ENCODE measurements at regions of chr10 and their contacts with region 1.

Region 1: DNA sequence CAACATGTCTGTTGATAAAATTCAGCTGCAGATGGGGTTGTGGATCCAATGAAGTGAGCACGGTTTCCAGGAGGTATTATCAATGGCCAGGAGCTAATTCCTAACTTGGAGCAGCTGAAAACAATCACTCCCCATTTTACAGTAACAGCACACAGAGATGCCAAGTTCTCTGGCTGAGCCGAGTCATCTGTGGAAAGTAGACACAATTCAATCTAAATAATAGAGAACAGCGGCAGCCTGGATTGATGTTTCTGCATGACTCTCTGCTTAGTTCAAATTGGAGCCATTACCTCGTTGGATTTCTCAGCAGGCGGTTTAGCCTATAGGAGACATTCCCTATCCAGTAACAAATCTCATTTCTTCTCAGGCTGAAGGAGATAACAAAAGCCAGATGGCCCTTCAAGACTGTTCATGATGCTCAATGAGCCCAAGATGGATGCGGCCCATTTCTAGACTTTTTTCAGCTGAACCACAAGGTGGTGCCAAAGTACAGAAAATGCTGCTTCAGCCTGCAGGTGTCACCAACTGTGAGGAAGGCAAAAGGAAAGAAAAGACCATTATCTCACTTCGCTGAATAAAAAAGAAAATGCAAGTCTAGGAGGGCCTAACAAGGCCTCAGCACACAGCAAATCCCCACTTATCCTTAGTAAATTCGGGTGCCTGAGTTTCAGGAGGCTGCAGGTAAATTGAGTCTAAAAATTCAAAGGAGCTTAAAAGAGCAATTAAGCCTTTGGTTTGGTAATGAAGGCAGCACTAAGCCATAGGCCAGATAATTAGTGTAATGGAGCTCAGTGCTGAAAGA is 83.7 kb downstream of the SLC16A9 start:
- DNase-seq: no peak
- H3K4me3 ChIP-seq: no peak overlapping the region
- H3K27ac ChIP-seq: no peak overlapping the region
- H3K4me1 ChIP-seq: peaks cover 0 to 3% of the 10 kb centered on the region in 2 donors
- H3K27me3 ChIP-seq: no peaks in the 10 kb centered on the region
- CTCF ChIP-seq: peak; percentile 68 to 88 (median 84)

Region 2: GRCh38 chr10:58952747-58953466 is 673.0 kb before region 1 on chr10:
- intact Hi-C with region 1: loop called (anchors 10 kb)
- DNase-seq: peak in 1 of 2 donors; percentile 72
- H3K4me3 ChIP-seq: no peak overlapping the region
- H3K27ac ChIP-seq: peak overlapping the region in 1 of 2 donors; percentile 1
- H3K4me1 ChIP-seq: peaks cover 0 to 7% of the 10 kb centered on the region in 2 donors
- H3K27me3 ChIP-seq: no peaks in the 10 kb centered on the region
- CTCF ChIP-seq: peak; percentile 74 to 88 (median 84)

Region 3: DNA sequence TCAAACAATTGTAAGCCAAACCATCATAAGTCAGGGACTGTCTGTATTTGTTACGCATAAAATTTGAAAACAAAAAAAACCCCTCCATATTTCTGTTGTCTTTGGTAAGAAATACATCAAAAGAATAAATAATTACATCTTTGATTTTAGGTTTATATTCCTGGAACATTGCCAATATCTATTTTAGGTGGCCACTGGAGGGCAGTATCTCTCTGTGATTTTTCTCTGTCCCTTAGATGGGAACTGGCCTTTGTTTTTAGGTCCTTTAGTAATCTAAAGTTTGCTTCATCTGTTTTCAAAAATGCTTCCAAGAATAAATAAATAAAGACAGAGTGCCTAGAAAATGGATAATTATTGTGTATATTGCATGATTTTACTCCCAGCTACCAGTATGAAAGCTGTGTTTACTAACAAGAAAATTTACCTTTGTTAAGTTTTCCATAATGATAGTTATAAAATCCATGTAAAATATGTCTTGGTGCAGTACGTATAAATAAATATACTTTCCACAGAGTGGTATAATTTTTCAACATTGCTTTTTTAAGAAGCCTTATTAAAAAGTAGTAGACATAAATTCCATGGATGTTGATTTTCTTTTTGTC is 385.2 kb before region 1 on chr10:
- intact Hi-C with region 1: loop called (anchors 1 kb)
- DNase-seq: no peak
- H3K4me3 ChIP-seq: no peak overlapping the region
- H3K27ac ChIP-seq: no peak overlapping the region
- H3K4me1 ChIP-seq: no peaks in the 10 kb centered on the region
- H3K27me3 ChIP-seq: no peaks in the 10 kb centered on the region
- CTCF ChIP-seq: peak; percentile 47 to 71 (median 68)

Region 4: DNA sequence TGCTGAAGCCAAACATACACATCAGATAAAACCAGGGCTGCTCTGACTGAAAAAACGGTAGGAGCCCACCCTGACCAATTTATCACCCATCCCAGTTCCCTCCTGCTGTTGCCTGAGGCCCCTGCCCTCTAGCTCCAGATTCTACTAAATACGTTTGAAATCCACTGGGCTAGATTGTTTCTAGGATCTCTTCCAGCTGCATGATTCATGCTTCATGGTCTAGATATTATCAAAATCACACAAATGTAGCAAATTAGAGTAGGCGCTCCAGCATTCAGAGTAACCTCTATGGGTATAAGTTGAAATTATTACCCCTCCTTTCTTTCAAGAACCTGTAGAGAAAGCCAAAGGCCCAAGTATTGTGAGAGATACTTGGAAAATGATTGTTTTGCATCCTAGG is 112.4 kb before region 1 on chr10:
- intact Hi-C with region 1: no loop called
- DNase-seq: no peak
- H3K4me3 ChIP-seq: no peak overlapping the region
- H3K27ac ChIP-seq: no peak overlapping the region
- H3K4me1 ChIP-seq: no peaks in the 10 kb centered on the region
- H3K27me3 ChIP-seq: no peaks in the 10 kb centered on the region
- CTCF ChIP-seq: no peak

Region 5: GRCh38 chr10:59808896-59809643 is 183.1 kb after region 1 on chr10:
- intact Hi-C with region 1: loop called (anchors 1 kb)
- DNase-seq: peak in 1 of 2 donors; percentile 84
- H3K4me3 ChIP-seq: no peak overlapping the region
- H3K27ac ChIP-seq: peak overlapping the region; percentile 15 to 66
- H3K4me1 ChIP-seq: peaks cover 12 to 22% of the 10 kb centered on the region in 2 donors
- H3K27me3 ChIP-seq: no peaks in the 10 kb centered on the region
- CTCF ChIP-seq: peak; percentile 9 to 54 (median 51)

Region 6: DNA sequence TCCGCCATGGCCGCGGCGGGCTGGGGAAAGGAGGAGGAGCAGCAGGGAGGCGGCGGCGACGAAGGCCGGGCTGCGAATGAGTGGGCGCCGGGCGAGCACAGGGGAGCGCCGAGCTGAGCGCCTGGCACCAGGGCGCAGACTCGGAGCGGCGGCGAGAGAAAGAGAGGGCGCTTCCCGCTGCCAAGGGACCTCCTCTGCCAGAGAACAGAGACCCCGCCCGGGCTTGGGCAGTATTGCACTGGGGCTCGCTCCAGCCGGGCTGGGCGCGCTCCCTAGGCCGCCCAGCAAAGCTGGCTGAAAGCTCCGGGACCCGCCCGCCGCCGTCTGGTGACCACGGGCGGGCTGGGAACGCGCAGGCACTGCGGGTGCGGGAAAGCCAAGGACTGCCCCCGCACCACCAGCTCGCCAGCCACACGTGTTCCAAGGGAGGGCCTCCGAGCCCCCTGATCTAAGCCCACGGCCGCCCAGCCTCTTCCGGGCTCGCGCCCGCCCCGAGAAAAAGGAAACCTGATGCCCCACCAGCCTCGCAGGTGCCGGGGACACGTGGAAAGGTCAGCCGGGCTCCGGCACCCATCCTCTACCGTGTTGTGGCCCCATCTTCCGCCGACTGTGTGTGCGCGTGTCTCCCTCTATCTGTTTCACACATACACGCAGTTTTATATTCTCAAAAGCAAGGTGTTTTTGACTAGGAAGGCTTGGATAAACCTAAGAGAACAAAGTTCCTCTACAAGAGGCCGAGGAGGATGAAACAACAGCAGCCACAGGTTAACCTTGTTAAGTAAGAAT is 280.7 kb after region 1 on chr10 and contains the start of gene CCDC6:
- intact Hi-C with region 1: loop called (anchors 5 kb)
- DNase-seq: peak; percentile 68 to 96
- H3K4me3 ChIP-seq: peak within 1 kb of the TSS; percentile 80 to 87
- H3K27ac ChIP-seq: peak within 1 kb of the TSS; percentile 90 to 95
- H3K4me1 ChIP-seq: peaks cover 0 to 12% of the 10 kb centered on the region in 2 donors
- H3K27me3 ChIP-seq: no peaks in the 10 kb centered on the region
- CTCF ChIP-seq: peak; percentile 77 to 97 (median 91)
- total RNA-seq, gene CCDC6: 21.1 TPM

Region 7: DNA sequence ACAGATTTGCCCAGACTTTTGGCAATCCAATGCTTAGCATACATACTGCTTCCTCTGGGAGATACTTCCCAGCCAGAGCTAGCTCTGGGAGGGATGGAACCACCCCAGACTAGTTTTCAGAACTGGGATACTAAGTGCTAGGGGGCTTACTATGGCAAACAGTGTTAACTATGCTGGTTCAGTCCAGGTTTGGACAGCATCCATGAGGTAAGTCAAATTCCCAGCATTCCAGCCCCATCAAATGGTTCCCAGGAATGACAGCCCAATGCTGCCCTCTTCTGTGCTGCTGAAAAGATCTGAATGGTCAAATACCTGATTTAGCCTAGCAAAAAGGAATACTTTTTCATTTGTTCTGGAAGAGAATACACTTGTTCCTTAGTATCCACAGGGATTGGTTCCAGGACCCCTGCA is 422.2 kb after region 1 on chr10:
- intact Hi-C with region 1: loop called (anchors 2 kb)
- DNase-seq: no peak
- H3K4me3 ChIP-seq: no peak overlapping the region
- H3K27ac ChIP-seq: no peak overlapping the region
- H3K4me1 ChIP-seq: peaks cover 7 to 9% of the 10 kb centered on the region in 2 donors
- H3K27me3 ChIP-seq: no peaks in the 10 kb centered on the region
- CTCF ChIP-seq: peak; percentile 28 to 44 (median 41)

Region 8: GRCh38 chr10:60099998-60100747 is 474.3 kb after region 1 on chr10:
- intact Hi-C with region 1: no loop called
- DNase-seq: no peak
- H3K4me3 ChIP-seq: no peak overlapping the region
- H3K27ac ChIP-seq: no peak overlapping the region
- H3K4me1 ChIP-seq: peaks cover under 1 to 6% of the 10 kb centered on the region in 2 donors
- H3K27me3 ChIP-seq: no peaks in the 10 kb centered on the region
- CTCF ChIP-seq: peak; percentile 46 to 69 (median 63)

Region 9: DNA sequence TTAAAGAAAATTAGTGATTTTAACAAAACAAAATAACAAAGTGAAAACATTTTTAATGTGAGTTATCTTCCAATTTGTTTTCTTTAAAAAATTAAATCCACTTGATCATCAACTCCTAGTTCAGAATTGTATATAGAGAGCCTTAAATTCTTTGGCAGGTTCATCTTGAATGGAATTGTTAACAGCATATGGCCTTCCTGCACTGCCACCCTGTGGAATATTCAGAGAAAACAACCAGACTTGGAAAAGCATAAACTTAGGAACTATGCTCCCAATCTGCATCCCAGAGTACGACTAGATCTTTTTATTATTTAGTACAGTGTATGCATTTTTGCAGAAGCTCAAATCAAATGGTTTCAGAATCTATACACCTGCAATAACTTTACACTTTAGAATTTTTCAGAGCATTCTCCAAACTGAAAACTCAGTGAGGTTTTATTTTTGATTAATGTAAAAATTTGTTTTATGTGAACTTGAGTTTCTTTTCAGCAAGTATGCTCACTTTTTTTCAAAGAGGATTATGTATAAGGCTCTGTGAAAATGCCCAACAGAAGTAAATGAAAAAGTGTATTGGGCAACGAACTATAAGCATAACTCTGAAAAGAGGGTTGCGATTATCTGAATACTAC is 808.6 kb after region 1 on chr10:
- intact Hi-C with region 1: loop called (anchors 10 kb)
- DNase-seq: no peak
- H3K4me3 ChIP-seq: no peak overlapping the region
- H3K27ac ChIP-seq: no peak overlapping the region
- H3K4me1 ChIP-seq: peaks cover 0 to under 1% of the 10 kb centered on the region in 2 donors
- H3K27me3 ChIP-seq: no peaks in the 10 kb centered on the region
- CTCF ChIP-seq: peak; percentile 65 to 75 (median 70)

Measured in ascending aorta (tissue), 2 donors.